RWPE1 (cell line): ENCODE measurements at regions of chr3 and their contacts with region 1.

Region 1: DNA sequence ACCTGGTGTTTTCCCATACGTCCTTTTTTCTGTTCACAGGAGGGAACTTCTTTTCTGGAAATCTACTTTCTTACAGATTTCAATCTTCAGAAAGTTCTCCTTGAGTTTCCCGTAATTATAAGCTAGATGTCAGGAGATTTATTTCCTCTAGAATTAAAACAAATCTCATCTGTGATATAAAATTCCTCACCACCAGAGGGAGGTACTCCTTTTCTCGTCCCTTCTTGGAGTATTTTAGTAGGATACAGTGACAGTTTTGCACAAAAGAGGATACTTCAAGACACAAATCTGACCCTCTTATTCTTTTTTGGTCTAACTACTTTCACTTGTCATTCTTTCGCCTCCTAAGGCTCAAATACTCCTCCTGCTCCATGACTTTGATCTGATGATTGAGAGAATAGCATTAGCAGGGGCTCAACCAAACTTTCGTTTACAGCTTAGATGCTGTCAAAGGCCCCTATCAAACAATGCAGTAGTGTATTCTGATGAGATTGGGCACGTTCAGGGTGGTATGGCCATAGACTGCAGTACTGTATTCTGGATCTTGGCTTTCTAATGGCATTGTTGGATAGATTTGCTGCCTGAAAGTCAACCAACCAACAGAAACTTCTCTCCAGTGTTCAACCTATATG is 38.0 kb downstream of the TMEM41A start:
- DNase-seq: peak; percentile 45
- H3K27ac ChIP-seq: no peak overlapping the region
- CTCF ChIP-seq: 0 out of 2 replicates have a peak, but pooled peaks have one; percentile 19

Region 2: GRCh38 chr3:184154885-184155643 is 1305.8 kb before region 1 on chr3 and contains the start of gene DVL3:
- CTCF ChIA-PET with region 1: no interaction called
- POLR2A ChIA-PET with region 1: no interaction called
- DNase-seq: peak; percentile 60
- H3K27ac ChIP-seq: peak within 1 kb of the TSS; percentile 95
- CTCF ChIP-seq: no peak

Region 3: DNA sequence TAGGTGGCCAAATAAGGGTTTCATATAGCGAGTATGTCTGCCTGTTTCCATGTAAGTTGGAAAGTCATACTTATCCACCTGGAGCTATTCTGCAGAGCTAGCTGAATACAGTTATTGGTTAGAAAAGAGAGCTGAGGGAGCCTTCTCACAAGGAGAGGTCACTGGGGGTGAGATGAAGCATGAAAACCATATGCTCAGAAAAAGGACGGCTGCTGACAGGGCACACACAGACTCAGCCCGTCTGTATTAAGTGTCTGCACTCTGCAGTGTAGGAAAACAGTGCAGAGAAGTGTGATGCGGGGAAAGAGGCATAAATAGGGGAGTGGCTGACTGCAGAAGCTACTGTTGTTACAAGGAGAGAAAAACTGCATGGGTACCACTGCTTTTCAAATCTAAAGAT is 366.1 kb before region 1 on chr3:
- CTCF ChIA-PET with region 1: interaction called, 10 read pairs
- POLR2A ChIA-PET with region 1: no interaction called
- DNase-seq: no peak
- H3K27ac ChIP-seq: no peak overlapping the region
- CTCF ChIP-seq: no peak

Region 4: GRCh38 chr3:185558395-185558794 is 97.6 kb after region 1 on chr3:
- CTCF ChIA-PET with region 1: interaction called, 14 read pairs
- POLR2A ChIA-PET with region 1: no interaction called
- DNase-seq: peak; percentile 76
- H3K27ac ChIP-seq: no peak overlapping the region
- CTCF ChIP-seq: no peak